Activated B cell treated with CpG ODN at 0.5 μM for 24 hours (primary cell): ENCODE measurements at regions of chr1 and their contacts with region 1.

Region 1: GRCh38 chr1:193054169-193054675 is 4.9 kb downstream of the UCHL5 start:
- DNase-seq: no peak
- ATAC-seq: no peak
- H3K4me3 Mint-ChIP-seq: no peak overlapping the region
- H3K27ac Mint-ChIP-seq: no peak overlapping the region
- H3K4me1 Mint-ChIP-seq: peaks cover 19% of the 10 kb centered on the region
- H3K27me3 Mint-ChIP-seq: no peaks in the 10 kb centered on the region
- CTCF ChIP-seq: no peak

Region 2: DNA sequence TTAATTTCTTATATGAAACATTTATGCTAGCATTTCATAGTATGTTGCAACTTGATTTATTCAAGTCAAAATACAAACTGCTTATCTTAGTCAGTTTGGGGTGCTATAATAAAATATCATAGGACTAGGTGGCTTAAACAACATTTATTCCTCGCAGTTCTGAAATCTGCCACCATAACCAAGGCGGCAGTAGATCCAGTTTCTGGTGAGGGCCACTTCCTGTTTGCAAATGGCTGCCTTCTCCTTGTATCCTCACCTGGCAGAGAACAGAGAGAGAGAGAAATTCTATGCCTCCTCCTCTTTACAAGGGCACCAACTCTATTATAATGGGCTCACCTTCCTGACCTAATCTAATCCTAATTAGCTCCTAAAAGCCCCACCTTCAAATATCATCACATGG is 321.4 kb before region 1 on chr1:
- CTCF ChIA-PET with region 1: no interaction called
- POLR2A ChIA-PET with region 1: no interaction called
- intact Hi-C with region 1: no loop called
- DNase-seq: no peak
- ATAC-seq: no peak
- H3K4me3 Mint-ChIP-seq: no peak overlapping the region
- H3K27ac Mint-ChIP-seq: no peak overlapping the region
- H3K4me1 Mint-ChIP-seq: no peaks in the 10 kb centered on the region
- H3K27me3 Mint-ChIP-seq: no peaks in the 10 kb centered on the region
- CTCF ChIP-seq: no peak

Region 3: GRCh38 chr1:193033610-193034009 is 20.6 kb before region 1 on chr1:
- CTCF ChIA-PET with region 1: no interaction called
- POLR2A ChIA-PET with region 1: no interaction called
- intact Hi-C with region 1: loop called (anchors 2 kb)
- DNase-seq: no peak
- ATAC-seq: no peak
- H3K4me3 Mint-ChIP-seq: no peak overlapping the region
- H3K27ac Mint-ChIP-seq: no peak overlapping the region
- H3K4me1 Mint-ChIP-seq: peaks cover 4% of the 10 kb centered on the region
- H3K27me3 Mint-ChIP-seq: no peaks in the 10 kb centered on the region
- CTCF ChIP-seq: no peak